ENCODE measurements at regions of chr16 and their contacts with region 1.

Region 1: DNA sequence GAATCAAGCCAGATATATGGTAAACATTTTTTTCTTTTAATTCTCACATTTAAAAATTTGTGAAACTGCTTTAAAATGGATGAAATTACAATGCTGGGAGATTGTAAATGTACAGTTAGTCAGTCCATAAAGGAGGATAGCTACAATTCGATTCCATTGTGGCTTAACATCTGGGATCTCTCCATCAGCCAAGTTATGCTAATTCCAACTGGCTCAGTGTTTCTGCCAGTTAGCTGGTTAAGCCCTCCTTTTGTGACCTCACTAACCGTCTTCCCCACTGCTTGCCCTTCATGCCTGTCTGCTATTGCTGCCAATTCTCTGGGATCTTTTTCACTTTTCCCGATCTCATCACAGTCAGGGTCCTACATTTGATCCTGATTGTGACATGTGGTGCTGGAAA is 1347.6 kb downstream of the CDH11 start:
- DNase-seq: no peak
- ATAC-seq: no peak
- H3K4me3 ChIP-seq: no peak overlapping the region
- H3K4me3 Mint-ChIP-seq: no peak overlapping the region
- H3K27ac ChIP-seq: no peak overlapping the region
- H3K27ac Mint-ChIP-seq: no peak overlapping the region
- H3K4me1 ChIP-seq: no peaks in the 10 kb centered on the region
- H3K4me1 Mint-ChIP-seq: no peaks in the 10 kb centered on the region
- H3K27me3 ChIP-seq: no peaks in the 10 kb centered on the region
- H3K27me3 Mint-ChIP-seq: no peaks in the 10 kb centered on the region

Region 2: GRCh38 chr16:63787014-63787413 is 12.7 kb after region 1 on chr16:
- CTCF ChIA-PET with region 1: no interaction called
- POLR2A ChIA-PET with region 1: interaction called in 1 of 2 experiments, 10 read pairs
- DNase-seq: no peak
- ATAC-seq: no peak
- H3K4me3 ChIP-seq: no peak overlapping the region
- H3K4me3 Mint-ChIP-seq: no peak overlapping the region
- H3K27ac ChIP-seq: no peak overlapping the region
- H3K27ac Mint-ChIP-seq: no peak overlapping the region
- H3K4me1 ChIP-seq: no peaks in the 10 kb centered on the region
- H3K4me1 Mint-ChIP-seq: no peaks in the 10 kb centered on the region
- H3K27me3 ChIP-seq: no peaks in the 10 kb centered on the region
- H3K27me3 Mint-ChIP-seq: no peaks in the 10 kb centered on the region

Region 3: DNA sequence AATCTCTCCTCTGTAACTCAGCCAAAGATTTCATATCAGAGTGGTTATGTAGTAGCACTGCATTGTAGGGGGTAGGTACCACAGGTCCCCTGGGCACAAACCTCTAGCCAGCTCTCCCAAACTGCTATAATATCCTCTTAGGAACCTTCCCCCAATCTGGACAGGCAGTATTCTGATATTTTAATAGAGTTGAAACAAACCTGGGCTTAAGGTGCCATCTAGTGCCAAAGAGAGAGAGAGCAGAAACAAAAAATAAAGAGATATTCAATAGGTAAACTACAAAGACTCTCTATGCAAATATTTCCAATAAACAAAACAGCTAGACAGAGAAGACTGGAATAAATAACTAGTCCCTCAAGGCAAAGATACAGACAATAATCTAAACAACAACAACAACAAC is 277.5 kb after region 1 on chr16:
- CTCF ChIA-PET with region 1: no interaction called
- POLR2A ChIA-PET with region 1: no interaction called
- DNase-seq: no peak
- ATAC-seq: no peak
- H3K4me3 ChIP-seq: no peak overlapping the region
- H3K4me3 Mint-ChIP-seq: no peak overlapping the region
- H3K27ac ChIP-seq: no peak overlapping the region
- H3K27ac Mint-ChIP-seq: no peak overlapping the region
- H3K4me1 ChIP-seq: no peaks in the 10 kb centered on the region
- H3K4me1 Mint-ChIP-seq: no peaks in the 10 kb centered on the region
- H3K27me3 ChIP-seq: no peaks in the 10 kb centered on the region
- H3K27me3 Mint-ChIP-seq: no peaks in the 10 kb centered on the region